ENCODE measurements at regions of chr10 and their contacts with region 1.

Region 1: GRCh38 chr10:28302638-28303488 is at the start of gene MPP7:
- DNase-seq: peak; percentile 92 to 98 (median 96)
- ATAC-seq: peak; percentile 94
- H3K4me3 ChIP-seq: peak within 1 kb of the TSS; percentile 64
- H3K4me3 Mint-ChIP-seq: peak within 1 kb of the TSS; percentile 91
- H3K27ac ChIP-seq: peak within 1 kb of the TSS in 1 of 2 donors; percentile 77
- H3K27ac Mint-ChIP-seq: peak within 1 kb of the TSS; percentile 90
- H3K4me1 ChIP-seq: peaks cover 29% of the 10 kb centered on the region
- H3K4me1 Mint-ChIP-seq: peaks cover 70% of the 10 kb centered on the region
- H3K27me3 ChIP-seq: no peaks in the 10 kb centered on the region
- H3K27me3 Mint-ChIP-seq: no peaks in the 10 kb centered on the region
- CTCF ChIP-seq: peak; percentile 71
- total RNA-seq, gene MPP7: 30.4 to 32.5 TPM

Region 2: GRCh38 chr10:28179006-28179742 is 123.7 kb before region 1 on chr10:
- CTCF ChIA-PET with region 1: interaction called, 3 read pairs
- POLR2A ChIA-PET with region 1: interaction called, 4 read pairs
- intact Hi-C with region 1: loop called in 1 of 2 experiments (anchors 5 kb)
- DNase-seq: peak in 5 of 14 experiments; percentile 8 to 78 (median 71)
- ATAC-seq: peak; percentile 75
- H3K4me3 ChIP-seq: peak overlapping the region; percentile 50
- H3K4me3 Mint-ChIP-seq: peak overlapping the region; percentile 89
- H3K27ac ChIP-seq: peak overlapping the region in 1 of 2 donors; percentile 15
- H3K27ac Mint-ChIP-seq: peak overlapping the region; percentile 87
- H3K4me1 ChIP-seq: peaks cover 9% of the 10 kb centered on the region
- H3K4me1 Mint-ChIP-seq: peaks cover 55% of the 10 kb centered on the region
- H3K27me3 ChIP-seq: no peaks in the 10 kb centered on the region
- H3K27me3 Mint-ChIP-seq: no peaks in the 10 kb centered on the region
- CTCF ChIP-seq: peak; percentile 90

Region 3: DNA sequence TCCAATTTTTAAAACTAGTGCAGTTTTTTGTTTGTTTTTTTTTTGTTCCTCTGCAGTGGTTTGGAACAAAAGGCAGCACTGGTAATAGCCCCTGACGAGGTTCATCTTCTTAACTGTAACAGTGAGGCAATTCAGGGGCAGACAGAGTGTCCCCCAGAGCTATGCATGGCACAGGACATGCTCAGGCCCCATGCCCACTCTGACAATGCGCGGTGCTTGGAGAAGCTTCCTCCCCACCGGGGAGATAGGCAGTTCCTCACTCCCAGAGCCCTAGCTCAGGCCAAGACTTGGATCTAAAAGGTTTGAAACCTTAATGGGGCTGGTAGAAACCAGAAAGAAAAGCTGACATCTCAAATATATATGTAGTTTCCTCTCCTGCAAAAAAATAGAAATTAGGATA is 17.9 kb after region 1 on chr10:
- CTCF ChIA-PET with region 1: interaction called, 28 read pairs
- POLR2A ChIA-PET with region 1: interaction called, 312 read pairs
- intact Hi-C with region 1: no loop called
- DNase-seq: no peak
- ATAC-seq: no peak
- H3K4me3 ChIP-seq: no peak overlapping the region
- H3K4me3 Mint-ChIP-seq: no peak overlapping the region
- H3K27ac ChIP-seq: no peak overlapping the region
- H3K27ac Mint-ChIP-seq: no peak overlapping the region
- H3K4me1 ChIP-seq: peaks cover 8% of the 10 kb centered on the region
- H3K4me1 Mint-ChIP-seq: peaks cover 34% of the 10 kb centered on the region
- H3K27me3 ChIP-seq: no peaks in the 10 kb centered on the region
- H3K27me3 Mint-ChIP-seq: no peaks in the 10 kb centered on the region
- CTCF ChIP-seq: no peak

Region 4: DNA sequence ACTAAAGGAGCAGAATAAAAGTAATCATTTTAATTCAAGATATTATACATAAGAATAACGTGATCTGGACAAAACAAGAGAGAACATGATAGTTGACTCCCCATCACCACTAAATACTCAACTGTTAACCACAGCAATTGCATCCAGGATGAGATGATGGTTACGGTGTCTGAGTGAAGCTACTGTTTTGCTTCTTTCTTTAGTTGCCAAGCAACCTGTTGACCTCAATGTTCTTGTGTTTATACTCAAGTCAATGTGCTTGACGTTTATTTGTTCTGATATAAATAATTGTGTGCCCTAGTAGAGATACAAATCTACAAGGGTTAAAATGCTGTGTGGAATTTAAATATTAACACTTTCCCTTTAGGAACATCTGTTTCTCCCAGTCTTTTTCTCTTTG is 31.4 kb after region 1 on chr10:
- CTCF ChIA-PET with region 1: interaction called, 52 read pairs
- POLR2A ChIA-PET with region 1: interaction called, 312 read pairs
- intact Hi-C with region 1: loop called in 1 of 2 experiments (anchors 1 kb)
- DNase-seq: peak in 8 of 14 experiments; percentile 17 to 97 (median 52)
- ATAC-seq: peak; percentile 68
- H3K4me3 ChIP-seq: peak overlapping the region; percentile 76
- H3K4me3 Mint-ChIP-seq: peak overlapping the region; percentile 90
- H3K27ac ChIP-seq: peak overlapping the region; percentile 97 to 99
- H3K27ac Mint-ChIP-seq: peak overlapping the region; percentile 98
- H3K4me1 ChIP-seq: peaks cover 64% of the 10 kb centered on the region
- H3K4me1 Mint-ChIP-seq: peaks cover 85% of the 10 kb centered on the region
- H3K27me3 ChIP-seq: no peaks in the 10 kb centered on the region
- H3K27me3 Mint-ChIP-seq: no peaks in the 10 kb centered on the region
- CTCF ChIP-seq: no peak

Region 5: GRCh38 chr10:28381903-28382347 is 79.1 kb after region 1 on chr10:
- CTCF ChIA-PET with region 1: interaction called, 68 read pairs
- POLR2A ChIA-PET with region 1: interaction called, 92 read pairs
- intact Hi-C with region 1: loop called (anchors 1 kb)
- DNase-seq: peak; percentile 71 to 92 (median 80)
- ATAC-seq: peak; percentile 98
- H3K4me3 ChIP-seq: no peak overlapping the region
- H3K4me3 Mint-ChIP-seq: no peak overlapping the region
- H3K27ac ChIP-seq: no peak overlapping the region
- H3K27ac Mint-ChIP-seq: peak overlapping the region; percentile 9
- H3K4me1 ChIP-seq: peaks cover 18% of the 10 kb centered on the region
- H3K4me1 Mint-ChIP-seq: peaks cover 41% of the 10 kb centered on the region
- H3K27me3 ChIP-seq: no peaks in the 10 kb centered on the region
- H3K27me3 Mint-ChIP-seq: no peaks in the 10 kb centered on the region
- CTCF ChIP-seq: peak; percentile 98

Region 6: DNA sequence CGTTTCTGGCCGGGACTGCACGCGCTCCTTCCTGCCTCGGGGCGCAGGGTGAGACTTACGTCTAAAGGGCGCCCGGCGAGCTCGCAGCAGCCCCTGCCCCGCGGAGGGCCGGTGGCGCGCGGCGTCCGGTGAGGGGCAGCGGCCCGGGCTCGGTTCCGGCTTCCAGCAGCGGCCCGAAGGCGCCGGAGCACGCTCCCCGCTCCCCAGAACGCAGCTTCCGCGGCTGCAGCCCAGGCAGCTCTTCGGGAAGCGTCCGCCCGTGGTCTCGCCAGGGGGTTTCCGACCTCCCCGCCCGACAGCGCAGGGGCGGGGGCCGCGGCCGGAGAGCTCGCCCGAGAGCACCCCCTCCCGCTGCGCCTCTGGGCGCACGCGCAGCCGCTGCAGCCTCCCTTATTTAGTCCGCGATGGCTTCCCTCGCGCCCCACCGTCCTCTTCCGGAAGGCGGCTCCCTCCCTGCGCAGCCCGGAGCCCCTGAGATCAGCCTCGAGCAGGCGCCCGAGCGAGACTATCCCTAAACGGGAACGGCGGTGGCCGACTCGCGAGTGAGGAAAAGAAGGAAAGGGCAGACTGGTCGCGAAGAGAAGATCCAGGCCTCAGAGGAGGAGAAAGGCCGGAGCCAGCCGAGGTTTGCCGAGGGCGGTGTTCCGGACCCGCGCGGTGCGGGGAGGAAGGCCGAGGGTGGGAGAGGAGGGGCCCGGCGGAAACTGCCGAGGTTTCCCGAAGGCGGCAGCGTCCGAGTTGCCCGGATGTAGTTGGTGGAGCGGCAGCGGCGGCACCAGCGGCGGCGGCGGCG is 229.7 kb after region 1 on chr10 and contains the start of gene WAC:
- CTCF ChIA-PET with region 1: no interaction called
- POLR2A ChIA-PET with region 1: interaction called, 8 read pairs
- intact Hi-C with region 1: loop called in 1 of 2 experiments (anchors 2 kb)
- DNase-seq: peak; percentile 93 to 98 (median 97)
- ATAC-seq: peak; percentile 81
- H3K4me3 ChIP-seq: peak within 1 kb of the TSS; percentile 98
- H3K4me3 Mint-ChIP-seq: peak within 1 kb of the TSS; percentile 100
- H3K27ac ChIP-seq: peak within 1 kb of the TSS; percentile 99
- H3K27ac Mint-ChIP-seq: peak within 1 kb of the TSS; percentile 98
- H3K4me1 ChIP-seq: peaks cover 22% of the 10 kb centered on the region
- H3K4me1 Mint-ChIP-seq: peaks cover 73% of the 10 kb centered on the region
- H3K27me3 ChIP-seq: no peaks in the 10 kb centered on the region
- H3K27me3 Mint-ChIP-seq: no peaks in the 10 kb centered on the region
- CTCF ChIP-seq: peak; percentile 30
- total RNA-seq, gene WAC: 169 to 177 TPM

Measured in CD4-positive, alpha-beta T cell (primary cell).